CD14-positive monocyte (primary cell): ENCODE measurements at regions of chr1 and their contacts with region 1.

Region 1: GRCh38 chr1:16204634-16205337 is 7.7 kb downstream of the ARHGEF19 start:
- DNase-seq: no peak
- H3K4me3 ChIP-seq: no peak overlapping the region
- H3K4me3 Mint-ChIP-seq: no peak overlapping the region
- H3K27ac ChIP-seq: no peak overlapping the region
- H3K27ac Mint-ChIP-seq: peak overlapping the region in 1 of 7 donors; percentile 64
- H3K4me1 ChIP-seq: peaks cover 22 to 26% of the 10 kb centered on the region in 2 donors
- H3K4me1 Mint-ChIP-seq: peaks cover 13% of the 10 kb centered on the region
- H3K27me3 ChIP-seq: no peaks in the 10 kb centered on the region
- H3K27me3 Mint-ChIP-seq: peaks cover 0 to 4% (median 0%) of the 10 kb centered on the region in 3 donors
- CTCF ChIP-seq: no peak

Region 2: DNA sequence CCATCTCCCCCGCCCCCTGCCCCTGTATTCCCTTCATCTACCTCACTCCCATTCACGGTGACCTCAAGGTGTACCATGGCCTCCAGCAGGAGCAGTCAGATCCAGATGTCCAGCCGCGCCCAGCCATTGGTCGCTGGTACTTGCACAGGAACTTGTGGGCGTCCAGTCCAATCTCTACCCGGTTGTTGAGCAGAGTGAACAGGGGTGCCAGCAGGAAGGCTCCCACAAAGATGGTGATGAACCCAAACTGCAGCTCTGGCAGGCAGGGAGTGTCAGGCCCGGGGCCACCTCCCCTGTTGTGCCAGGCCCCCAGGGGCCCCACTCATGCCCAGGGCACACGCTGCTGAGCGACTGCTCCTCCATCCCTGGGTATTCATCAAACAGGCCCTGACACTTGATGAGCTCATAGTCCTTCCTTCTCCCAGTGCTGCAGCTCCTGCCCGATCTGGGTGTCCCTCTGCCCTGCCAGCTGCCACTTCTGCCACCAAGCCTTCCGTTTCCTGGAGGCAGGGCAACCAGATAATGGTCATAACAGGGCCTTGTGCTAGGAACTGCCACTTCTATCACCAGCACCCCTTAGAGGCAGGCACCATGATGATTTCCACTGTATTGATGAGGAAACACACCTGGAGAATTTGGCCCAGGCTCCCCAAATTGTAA is 13.4 kb after region 1 on chr1:
- intact Hi-C with region 1: loop called in 1 of 2 experiments (anchors 2 kb)
- DNase-seq: no peak
- H3K4me3 ChIP-seq: peak overlapping the region in 1 of 3 experiments; percentile 80
- H3K4me3 Mint-ChIP-seq: peak overlapping the region in 1 of 2 donors; percentile 90
- H3K27ac ChIP-seq: no peak overlapping the region
- H3K27ac Mint-ChIP-seq: peak overlapping the region in 2 of 7 donors; percentile 30 to 80
- H3K4me1 ChIP-seq: peaks cover 16 to 23% of the 10 kb centered on the region in 2 donors
- H3K4me1 Mint-ChIP-seq: peaks cover 25% of the 10 kb centered on the region
- H3K27me3 ChIP-seq: peaks cover 0 to 4% of the 10 kb centered on the region in 2 donors
- H3K27me3 Mint-ChIP-seq: peaks cover 9 to 19% (median 16%) of the 10 kb centered on the region in 3 donors
- CTCF ChIP-seq: no peak

Region 3: GRCh38 chr1:16351994-16352841 is 147.4 kb after region 1 on chr1 and contains the start of gene FBXO42:
- intact Hi-C with region 1: no loop called
- DNase-seq: peak; percentile 86 to 90 (median 88)
- H3K4me3 ChIP-seq: peak within 1 kb of the TSS; percentile 97 to 98 (median 97)
- H3K4me3 Mint-ChIP-seq: peak within 1 kb of the TSS; percentile 93 to 94
- H3K27ac ChIP-seq: peak within 1 kb of the TSS; percentile 75 to 92
- H3K27ac Mint-ChIP-seq: peak within 1 kb of the TSS; percentile 87 to 98 (median 95)
- H3K4me1 ChIP-seq: peaks cover 23 to 41% of the 10 kb centered on the region in 2 donors
- H3K4me1 Mint-ChIP-seq: peaks cover 34% of the 10 kb centered on the region
- H3K27me3 ChIP-seq: no peaks in the 10 kb centered on the region
- H3K27me3 Mint-ChIP-seq: no peaks in the 10 kb centered on the region
- CTCF ChIP-seq: peak; percentile 34
- polyA plus RNA-seq, gene FBXO42: 11.6 to 18.4 (median 16.9) TPM